Calu3 (cell line): ENCODE measurements at regions of chrX and their contacts with region 1.

Region 1: GRCh38 chrX:110407910-110408545 is 49.4 kb downstream of the RTL9 start:
- DNase-seq: peak; percentile 74
- H3K4me3 Mint-ChIP-seq: no peak overlapping the region
- H3K27ac Mint-ChIP-seq: no peak overlapping the region
- H3K4me1 Mint-ChIP-seq: peaks cover 11% of the 10 kb centered on the region
- H3K27me3 Mint-ChIP-seq: no peaks in the 10 kb centered on the region
- CTCF ChIP-seq: peak; percentile 70

Region 2: GRCh38 chrX:110156167-110156754 is 251.8 kb before region 1 on chrX:
- CTCF ChIA-PET with region 1: interaction called, 12 read pairs
- intact Hi-C with region 1: loop called (anchors 1 kb)
- DNase-seq: no peak
- H3K4me3 Mint-ChIP-seq: no peak overlapping the region
- H3K27ac Mint-ChIP-seq: no peak overlapping the region
- H3K4me1 Mint-ChIP-seq: peaks cover 14% of the 10 kb centered on the region
- H3K27me3 Mint-ChIP-seq: no peaks in the 10 kb centered on the region
- CTCF ChIP-seq: peak; percentile 41

Region 3: GRCh38 chrX:110180176-110180927 is 227.7 kb before region 1 on chrX:
- CTCF ChIA-PET with region 1: no interaction called
- intact Hi-C with region 1: no loop called
- DNase-seq: peak; percentile 16
- H3K4me3 Mint-ChIP-seq: no peak overlapping the region
- H3K27ac Mint-ChIP-seq: peak overlapping the region; percentile 36
- H3K4me1 Mint-ChIP-seq: peaks cover 37% of the 10 kb centered on the region
- H3K27me3 Mint-ChIP-seq: no peaks in the 10 kb centered on the region
- CTCF ChIP-seq: no peak

Region 4: GRCh38 chrX:110268886-110269285 is 139.1 kb before region 1 on chrX:
- CTCF ChIA-PET with region 1: no interaction called
- intact Hi-C with region 1: no loop called
- DNase-seq: no peak
- H3K4me3 Mint-ChIP-seq: no peak overlapping the region
- H3K27ac Mint-ChIP-seq: no peak overlapping the region
- H3K4me1 Mint-ChIP-seq: peaks cover 23% of the 10 kb centered on the region
- H3K27me3 Mint-ChIP-seq: no peaks in the 10 kb centered on the region
- CTCF ChIP-seq: no peak